MCF 10A (cell line): ENCODE measurements at regions of chr7 and their contacts with region 1.

Region 1: DNA sequence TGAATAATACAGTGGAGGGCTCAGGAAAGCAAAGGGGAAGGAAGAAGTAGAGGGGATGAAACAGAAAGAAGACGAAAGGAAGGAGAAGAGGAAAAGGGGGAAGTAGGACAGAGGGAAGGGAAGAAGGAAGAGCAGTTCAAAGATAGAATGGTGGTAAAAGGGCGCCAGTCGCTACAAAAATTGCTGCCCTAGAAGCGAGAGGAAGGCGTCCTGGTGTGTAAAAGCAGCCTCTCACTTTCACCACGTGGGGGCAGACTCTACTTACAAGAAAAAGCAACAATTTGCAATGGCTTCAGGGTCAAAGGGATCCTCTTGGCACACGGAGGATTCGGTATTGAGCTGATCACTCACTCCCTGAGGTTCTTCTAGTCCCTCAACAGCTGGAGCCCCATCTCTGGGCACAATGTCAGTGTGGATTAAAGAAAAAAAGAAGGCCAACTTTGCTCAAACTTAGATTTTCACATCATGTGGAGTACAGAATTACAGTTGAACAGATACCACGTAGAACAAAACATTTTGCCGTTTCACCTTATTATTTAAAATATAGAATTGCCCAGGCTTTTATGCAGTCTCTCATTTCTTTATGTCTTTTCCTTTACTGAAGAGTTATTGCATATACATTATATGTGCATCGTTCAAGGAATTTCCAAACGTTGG is 31.4 kb upstream of the NPVF start:
- DNase-seq: peak; percentile 83
- H3K4me3 Mint-ChIP-seq: no peak overlapping the region
- H3K27ac Mint-ChIP-seq: no peak overlapping the region
- H3K4me1 Mint-ChIP-seq: peaks cover 9% of the 10 kb centered on the region
- H3K27me3 Mint-ChIP-seq: peaks cover 71% of the 10 kb centered on the region
- CTCF ChIP-seq: peak; percentile 89

Region 2: GRCh38 chr7:25844102-25844870 is 584.6 kb after region 1 on chr7:
- CTCF ChIA-PET with region 1: interaction called, 11 read pairs
- POLR2A ChIA-PET with region 1: no interaction called
- intact Hi-C with region 1: no loop called
- DNase-seq: no peak
- H3K4me3 Mint-ChIP-seq: no peak overlapping the region
- H3K27ac Mint-ChIP-seq: no peak overlapping the region
- H3K4me1 Mint-ChIP-seq: peaks cover 19% of the 10 kb centered on the region
- H3K27me3 Mint-ChIP-seq: peaks cover under 1% of the 10 kb centered on the region
- CTCF ChIP-seq: no peak